ENCODE measurements at regions of chr1 and their contacts with region 1.

Region 1: GRCh38 chr1:209769171-209769904 is 13.5 kb downstream of the TRAF3IP3 start:
- DNase-seq: peak; percentile 88
- H3K4me3 Mint-ChIP-seq: no peak overlapping the region
- H3K27ac Mint-ChIP-seq: no peak overlapping the region
- H3K4me1 Mint-ChIP-seq: peaks cover 32% of the 10 kb centered on the region
- H3K27me3 Mint-ChIP-seq: no peaks in the 10 kb centered on the region

Region 2: DNA sequence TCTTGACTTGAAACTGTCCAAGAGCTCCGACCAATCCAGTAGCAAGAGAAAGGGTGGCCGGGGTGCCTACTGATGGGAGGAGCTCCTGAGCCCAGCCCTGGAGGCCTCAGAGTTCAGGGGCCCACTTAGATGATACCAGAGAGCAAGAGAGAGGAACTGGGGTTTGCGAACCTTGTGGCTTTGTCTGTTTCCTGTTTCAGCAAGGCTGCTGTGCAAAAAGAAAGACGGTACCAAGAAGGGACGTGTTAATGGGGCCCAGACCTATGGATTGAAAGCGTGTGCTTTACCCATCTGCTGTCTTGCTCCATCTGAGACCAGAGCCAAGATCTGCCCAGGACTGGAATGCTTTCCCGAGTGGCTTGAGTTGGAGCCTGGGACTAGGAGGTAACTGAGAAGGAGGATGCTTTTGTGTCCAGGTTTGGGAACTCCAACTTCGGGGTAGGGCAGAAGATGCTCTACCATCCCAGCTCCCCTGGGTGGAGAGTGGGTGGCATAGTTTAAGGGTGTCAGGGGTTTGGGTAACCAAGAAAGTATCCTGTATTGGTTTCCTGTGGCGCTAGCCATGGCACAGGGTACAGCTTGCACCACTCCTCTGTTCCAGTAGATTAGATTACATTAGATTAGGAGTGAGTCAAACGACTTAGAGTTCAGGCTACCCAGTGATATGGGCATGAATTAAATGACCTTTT is 13.3 kb before region 1 on chr1 and contains the start of gene TRAF3IP3:
- CTCF ChIA-PET with region 1: interaction called, 96 read pairs
- DNase-seq: peak; percentile 87
- H3K4me3 Mint-ChIP-seq: peak within 1 kb of the TSS; percentile 99
- H3K27ac Mint-ChIP-seq: peak within 1 kb of the TSS; percentile 99
- H3K4me1 Mint-ChIP-seq: peaks cover 77% of the 10 kb centered on the region
- H3K27me3 Mint-ChIP-seq: no peaks in the 10 kb centered on the region

Region 3: DNA sequence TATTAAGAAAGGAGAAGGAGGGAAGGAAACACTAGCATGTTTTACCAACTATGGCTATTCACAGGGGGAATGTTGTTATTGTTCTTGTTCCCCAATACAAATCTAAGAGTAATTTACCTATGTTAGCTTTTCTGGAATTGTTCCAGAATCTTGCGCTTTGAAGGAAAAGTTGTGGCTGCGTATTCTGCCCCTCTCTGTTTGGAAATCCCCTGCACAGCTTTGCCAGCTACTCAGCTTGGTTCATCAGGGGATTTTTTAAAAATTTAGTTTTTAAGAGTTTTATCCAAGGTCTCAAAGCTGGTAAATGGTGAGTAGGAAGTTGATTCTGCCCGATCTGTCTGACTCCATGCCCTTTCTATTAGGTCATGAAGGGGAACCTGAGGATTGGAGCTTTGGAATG is 46.2 kb after region 1 on chr1:
- CTCF ChIA-PET with region 1: no interaction called
- DNase-seq: no peak
- H3K4me3 Mint-ChIP-seq: no peak overlapping the region
- H3K27ac Mint-ChIP-seq: no peak overlapping the region
- H3K4me1 Mint-ChIP-seq: no peaks in the 10 kb centered on the region
- H3K27me3 Mint-ChIP-seq: peaks cover 33% of the 10 kb centered on the region